Ascending aorta (tissue), 2 donors: ENCODE measurements at regions of chr11 and their contacts with region 1.

Region 1: DNA sequence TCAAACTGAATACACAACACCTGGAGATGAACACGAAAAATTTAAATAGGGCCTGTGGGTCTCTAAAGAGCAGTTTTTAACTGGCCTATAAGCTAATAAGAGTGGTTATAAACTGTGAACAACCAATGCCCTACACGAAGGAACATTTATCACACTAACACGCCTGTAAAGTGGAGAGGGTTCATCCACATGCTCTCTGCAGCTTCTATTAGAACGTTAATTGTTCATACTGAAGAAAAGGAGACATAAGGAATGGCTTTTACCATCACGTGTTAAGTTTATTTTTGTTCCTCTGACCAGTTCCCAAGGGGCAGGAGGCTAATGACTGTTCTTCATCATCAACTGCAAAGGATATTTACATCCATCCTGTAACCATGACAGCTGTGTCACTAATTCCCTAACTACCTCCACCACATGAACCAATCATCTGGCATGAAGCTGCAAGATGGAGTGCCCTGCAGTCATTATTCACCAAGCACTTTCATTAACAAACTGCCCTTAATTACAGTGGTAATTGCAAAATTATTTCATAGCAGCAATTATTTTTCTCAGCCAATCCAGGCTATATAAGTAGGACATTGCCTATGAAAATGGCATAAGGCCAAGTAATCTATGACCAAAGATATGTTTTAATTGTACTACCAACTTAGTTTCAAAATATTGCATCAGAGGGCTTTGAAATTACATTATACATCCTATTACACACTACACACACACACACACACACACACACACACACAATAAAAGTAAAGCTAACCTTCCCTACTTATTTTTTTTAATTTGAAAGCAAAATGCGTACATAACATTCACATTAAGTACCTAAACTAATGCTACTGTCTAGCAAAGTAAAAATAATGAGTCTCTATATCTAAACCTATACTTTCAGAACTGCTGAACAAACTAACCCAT is 186.7 kb downstream of the CADM1 start:
- DNase-seq: no peak
- H3K4me3 ChIP-seq: no peak overlapping the region
- H3K27ac ChIP-seq: no peak overlapping the region
- H3K4me1 ChIP-seq: no peaks in the 10 kb centered on the region
- H3K27me3 ChIP-seq: no peaks in the 10 kb centered on the region
- CTCF ChIP-seq: no peak

Region 2: GRCh38 chr11:115144914-115145313 is 172.6 kb before region 1 on chr11:
- intact Hi-C with region 1: no loop called
- DNase-seq: no peak
- H3K4me3 ChIP-seq: no peak overlapping the region
- H3K27ac ChIP-seq: no peak overlapping the region
- H3K4me1 ChIP-seq: no peaks in the 10 kb centered on the region
- H3K27me3 ChIP-seq: no peaks in the 10 kb centered on the region
- CTCF ChIP-seq: no peak

Region 3: GRCh38 chr11:115300660-115301428 is 16.7 kb before region 1 on chr11:
- intact Hi-C with region 1: no loop called
- DNase-seq: no peak
- H3K4me3 ChIP-seq: no peak overlapping the region
- H3K27ac ChIP-seq: no peak overlapping the region
- H3K4me1 ChIP-seq: no peaks in the 10 kb centered on the region
- H3K27me3 ChIP-seq: no peaks in the 10 kb centered on the region
- CTCF ChIP-seq: no peak

Region 4: DNA sequence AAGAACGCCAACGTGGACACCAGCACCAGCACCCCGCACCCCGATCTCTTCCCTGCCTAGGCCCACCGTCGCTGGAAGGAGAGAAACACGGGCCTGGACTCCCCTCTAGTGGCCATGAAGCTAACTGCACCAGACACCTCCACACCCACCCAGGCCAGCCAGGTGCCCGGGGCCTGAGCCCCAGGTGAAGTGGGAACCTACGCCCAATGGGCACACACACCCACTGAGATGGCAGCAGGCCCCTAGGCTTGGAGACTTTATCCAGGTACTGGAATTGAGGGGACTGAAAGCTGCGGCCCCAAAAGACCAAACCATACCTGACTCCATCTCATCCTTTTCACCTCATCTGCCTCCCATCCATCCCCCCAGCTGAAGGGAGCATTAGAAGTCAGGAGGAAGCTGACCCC is 1374.2 kb after region 1 on chr11:
- intact Hi-C with region 1: loop called (anchors 10 kb)
- DNase-seq: peak in 1 of 2 donors; percentile 56
- H3K4me3 ChIP-seq: no peak overlapping the region
- H3K27ac ChIP-seq: no peak overlapping the region
- H3K4me1 ChIP-seq: no peaks in the 10 kb centered on the region
- H3K27me3 ChIP-seq: no peaks in the 10 kb centered on the region
- CTCF ChIP-seq: peak; percentile 50 to 75 (median 64)